Aorta (tissue), 5 donors: ENCODE measurements at regions of chr1 and their contacts with region 1.

Region 1: DNA sequence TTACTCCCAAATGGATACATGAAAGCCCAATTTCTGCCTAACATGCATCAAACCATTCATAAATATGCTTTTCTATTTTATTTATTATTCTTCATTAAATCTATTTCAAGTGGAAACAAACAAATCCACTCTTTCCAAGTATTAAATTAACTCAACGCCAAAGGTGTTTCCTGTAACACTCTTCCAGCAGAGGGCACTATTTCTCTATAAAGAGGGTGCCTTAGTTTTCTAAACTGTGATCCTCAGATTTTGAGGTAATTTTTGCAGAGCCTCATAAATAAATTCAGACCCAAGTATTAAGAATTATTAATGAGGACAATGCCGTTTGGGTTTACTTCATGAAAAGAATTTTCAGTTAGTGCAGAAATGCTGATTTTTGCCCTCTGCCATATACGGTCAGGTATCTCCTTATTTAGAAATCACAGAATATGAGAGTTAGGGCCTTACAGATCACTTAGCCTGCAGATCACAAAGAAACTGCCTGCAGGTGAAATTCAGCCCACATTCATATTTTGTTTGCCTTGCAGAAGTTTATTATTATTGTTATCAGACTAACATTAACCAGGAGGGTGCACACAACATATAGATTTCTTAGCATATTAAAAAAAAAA is 40.1 kb upstream of the MYSM1 start:
- DNase-seq: no peak
- ATAC-seq: peak; percentile 70
- H3K4me3 ChIP-seq: no peak overlapping the region
- H3K27ac ChIP-seq: no peak overlapping the region
- H3K4me1 ChIP-seq: no peaks in the 10 kb centered on the region
- H3K27me3 ChIP-seq: no peaks in the 10 kb centered on the region

Region 2: GRCh38 chr1:58679463-58679862 is 60.5 kb before region 1 on chr1:
- intact Hi-C with region 1: no loop called
- DNase-seq: no peak
- ATAC-seq: no peak
- H3K4me3 ChIP-seq: no peak overlapping the region
- H3K27ac ChIP-seq: no peak overlapping the region
- H3K4me1 ChIP-seq: no peaks in the 10 kb centered on the region
- H3K27me3 ChIP-seq: no peaks in the 10 kb centered on the region

Region 3: GRCh38 chr1:58768971-58769808 is 29.2 kb after region 1 on chr1:
- intact Hi-C with region 1: loop called (anchors 2 kb)
- DNase-seq: peak; percentile 79 to 95
- ATAC-seq: peak; percentile 71
- H3K4me3 ChIP-seq: no peak overlapping the region
- H3K27ac ChIP-seq: no peak overlapping the region
- H3K4me1 ChIP-seq: peaks cover 0 to 3% of the 10 kb centered on the region in 2 donors
- H3K27me3 ChIP-seq: no peaks in the 10 kb centered on the region

Region 4: DNA sequence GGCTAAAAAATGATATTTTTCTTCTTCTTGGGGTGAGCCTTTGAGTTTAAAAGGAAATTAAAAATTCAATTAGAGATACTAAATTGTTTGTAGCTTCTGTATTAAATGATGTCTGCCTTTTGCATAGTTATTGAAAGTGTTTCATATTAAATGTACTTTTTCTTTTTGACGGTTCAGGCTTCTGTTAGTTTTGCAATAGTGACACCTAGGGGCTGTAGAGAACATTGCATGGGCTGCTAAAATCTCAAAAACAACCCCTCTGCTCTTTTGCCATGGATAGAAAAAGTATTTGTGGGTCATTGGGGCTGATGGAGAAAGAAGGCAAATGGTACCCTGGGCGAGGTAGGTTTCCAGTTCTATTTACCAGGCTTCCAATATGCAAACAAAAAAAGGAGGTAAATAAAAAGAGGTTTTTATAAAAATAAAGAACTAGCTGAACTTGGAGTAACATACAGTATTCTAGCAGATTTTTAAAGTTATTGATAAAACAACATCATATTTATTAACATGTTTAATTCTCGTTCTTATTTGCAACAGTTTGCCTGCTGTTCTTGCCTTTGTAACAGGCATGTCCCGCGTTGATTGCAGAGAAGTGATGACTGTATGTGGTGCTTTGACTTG is 959.4 kb after region 1 on chr1:
- intact Hi-C with region 1: loop called (anchors 2 to 5 kb)
- DNase-seq: no peak
- ATAC-seq: peak; percentile 60
- H3K4me3 ChIP-seq: no peak overlapping the region
- H3K27ac ChIP-seq: no peak overlapping the region
- H3K4me1 ChIP-seq: peaks cover 3 to 11% of the 10 kb centered on the region in 2 donors
- H3K27me3 ChIP-seq: no peaks in the 10 kb centered on the region

Region 5: DNA sequence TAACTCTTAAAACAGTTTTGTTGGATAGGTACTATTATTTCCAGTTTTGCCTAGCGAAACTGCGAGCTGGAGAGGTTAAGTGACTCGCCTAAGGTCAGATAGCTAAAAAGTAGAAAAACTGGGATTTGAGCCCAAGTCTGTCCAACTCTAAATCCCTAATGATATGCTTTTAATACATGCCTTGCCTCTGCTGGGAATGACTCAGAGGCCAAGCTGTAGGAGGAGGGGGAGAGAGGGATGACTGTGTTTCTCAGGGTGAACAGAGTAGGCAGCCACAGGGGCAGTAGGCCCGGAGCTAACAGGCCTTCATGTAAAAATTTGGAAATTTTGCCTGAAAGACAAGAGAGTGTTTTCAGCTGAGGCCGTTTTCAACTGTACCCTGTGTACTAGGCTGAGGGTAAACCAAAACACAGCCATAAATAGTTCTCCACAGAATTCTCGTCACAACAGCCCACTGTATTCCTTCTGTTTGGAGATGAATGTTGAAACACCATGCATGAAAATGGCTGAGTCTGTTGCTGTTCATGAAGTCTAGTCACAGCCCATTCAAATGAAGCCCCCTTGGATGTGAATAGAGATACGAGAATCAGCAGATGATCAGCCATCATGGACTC is 967.3 kb after region 1 on chr1:
- intact Hi-C with region 1: loop called in 1 of 2 experiments (anchors 5 kb)
- DNase-seq: peak; percentile 77
- ATAC-seq: peak; percentile 82
- H3K4me3 ChIP-seq: no peak overlapping the region
- H3K27ac ChIP-seq: peak overlapping the region in 1 of 2 donors; percentile 78
- H3K4me1 ChIP-seq: peaks cover 5 to 20% of the 10 kb centered on the region in 2 donors
- H3K27me3 ChIP-seq: no peaks in the 10 kb centered on the region

Region 6: DNA sequence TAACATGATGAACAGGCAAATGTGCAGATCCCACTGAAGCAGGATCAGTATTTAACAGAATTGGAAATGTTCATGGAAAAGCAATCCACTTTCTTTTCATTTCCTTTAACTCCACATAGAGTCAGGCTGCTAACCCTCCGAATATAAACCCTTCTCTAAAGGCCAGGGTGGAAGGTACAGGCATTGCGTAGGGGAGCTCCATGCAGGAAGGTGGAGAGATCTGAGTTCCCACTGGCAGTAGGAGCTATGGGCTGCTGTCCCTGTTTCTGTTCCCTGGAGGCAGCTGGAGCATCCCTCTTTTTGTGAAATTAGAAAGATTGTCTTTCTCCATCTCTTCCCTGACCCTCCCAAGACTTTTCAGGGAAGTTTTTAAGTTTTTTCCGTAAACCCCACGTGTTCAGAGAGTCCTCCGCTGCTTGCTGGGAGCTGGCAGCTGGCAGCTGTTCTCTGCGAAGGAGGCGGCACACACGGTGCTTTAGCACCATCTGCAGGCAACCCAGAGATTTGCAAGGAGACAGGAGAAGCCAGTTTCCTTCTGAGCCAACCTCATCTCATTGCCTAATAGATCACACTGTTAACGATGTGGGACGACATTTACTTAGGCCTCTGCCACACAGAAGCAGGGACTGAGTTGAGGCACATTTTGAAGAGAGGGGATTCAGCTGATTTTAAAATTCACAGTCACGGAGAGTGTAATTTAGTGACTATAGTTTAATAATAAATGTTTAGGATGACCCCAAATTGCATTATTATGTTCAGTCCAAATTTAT is 1019.4 kb after region 1 on chr1:
- intact Hi-C with region 1: loop called in 1 of 2 experiments (anchors 5 kb)
- DNase-seq: peak; percentile 88 to 89
- ATAC-seq: peak; percentile 98
- H3K4me3 ChIP-seq: peak overlapping the region in 1 of 2 donors; percentile 24
- H3K27ac ChIP-seq: no peak overlapping the region
- H3K4me1 ChIP-seq: no peaks in the 10 kb centered on the region
- H3K27me3 ChIP-seq: no peaks in the 10 kb centered on the region